HepG2 (cell line): ENCODE measurements at regions of chr16 and their contacts with region 1.

Region 1: GRCh38 chr16:85821441-85822135 is 22.1 kb downstream of the COX4I1 start:
- DNase-seq: peak; percentile 67
- ATAC-seq: peak; percentile 85
- H3K4me3 ChIP-seq: no peak overlapping the region
- H3K27ac ChIP-seq: no peak overlapping the region
- H3K4me1 ChIP-seq: no peaks in the 10 kb centered on the region
- H3K27me3 ChIP-seq: peaks cover 2 to 23% of the 10 kb centered on the region in 2 experiments; a peak in 4 of 5 replicates
- CTCF ChIP-seq: peak; percentile 98
- EP300 ChIP-seq: no peak
- POLR2A ChIP-seq: no peak
- RAD21 ChIP-seq: peak; percentile 100

Region 2: DNA sequence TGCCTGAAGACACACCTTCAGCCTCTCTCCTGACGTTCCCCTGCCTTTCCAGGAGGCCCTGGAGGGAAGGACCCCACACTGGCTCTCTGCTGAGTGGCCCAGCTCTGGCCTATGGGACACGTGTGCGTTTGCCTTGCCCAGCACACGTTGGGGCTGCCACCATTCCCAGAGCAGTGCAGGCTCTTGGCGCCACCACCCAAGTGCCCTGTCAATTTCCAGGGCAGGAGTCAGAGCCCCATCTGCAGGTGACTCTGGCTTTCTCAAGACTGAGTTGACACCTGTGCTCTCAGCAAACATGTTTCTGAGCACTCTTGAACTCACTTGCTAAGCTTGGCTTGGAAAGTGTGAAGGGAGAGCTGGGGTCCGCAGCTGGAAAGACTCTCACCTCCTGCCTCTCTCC is 72.7 kb after region 1 on chr16:
- CTCF ChIA-PET with region 1: interaction called, 16 read pairs
- POLR2A ChIA-PET with region 1: no interaction called
- in situ Hi-C with region 1: loop called (anchors 5 kb)
- intact Hi-C with region 1: loop called (anchors 1 kb)
- DNase-seq: peak; percentile 40
- ATAC-seq: peak; percentile 86
- H3K4me3 ChIP-seq: no peak overlapping the region
- H3K27ac ChIP-seq: no peak overlapping the region
- H3K4me1 ChIP-seq: peaks cover 10% of the 10 kb centered on the region; the same call in 1 of the 2 replicates
- H3K27me3 ChIP-seq: peaks cover 5 to 67% of the 10 kb centered on the region in 2 experiments; a peak in 4 of 5 replicates
- CTCF ChIP-seq: peak; percentile 71
- EP300 ChIP-seq: no peak
- POLR2A ChIP-seq: no peak
- RAD21 ChIP-seq: peak; percentile 79

Region 3: GRCh38 chr16:85986931-85987749 is 165.6 kb after region 1 on chr16:
- CTCF ChIA-PET with region 1: interaction called, 108 read pairs
- POLR2A ChIA-PET with region 1: interaction called, 4 read pairs
- in situ Hi-C with region 1: loop called (anchors 5 kb)
- intact Hi-C with region 1: loop called (anchors 1 kb)
- DNase-seq: peak; percentile 12
- ATAC-seq: peak; percentile 66
- H3K4me3 ChIP-seq: peak overlapping the region; percentile 3 to 61 (median 6); a peak in 5 of 6 replicates
- H3K27ac ChIP-seq: no peak overlapping the region
- H3K4me1 ChIP-seq: peaks cover 8% of the 10 kb centered on the region; the same call in 1 of the 2 replicates
- H3K27me3 ChIP-seq: peaks cover 0 to 39% of the 10 kb centered on the region in 2 experiments; a peak in 3 of 5 replicates
- CTCF ChIP-seq: peak; percentile 65
- EP300 ChIP-seq: no peak
- POLR2A ChIP-seq: no peak
- RAD21 ChIP-seq: peak; percentile 70

Region 4: GRCh38 chr16:86016201-86016871 is 194.7 kb after region 1 on chr16:
- CTCF ChIA-PET with region 1: interaction called, 81 read pairs
- POLR2A ChIA-PET with region 1: no interaction called
- in situ Hi-C with region 1: loop called (anchors 5 kb)
- intact Hi-C with region 1: loop called (anchors 1 kb)
- DNase-seq: peak; percentile 47
- ATAC-seq: peak; percentile 81
- H3K4me3 ChIP-seq: no peak overlapping the region
- H3K27ac ChIP-seq: no peak overlapping the region
- H3K4me1 ChIP-seq: no peaks in the 10 kb centered on the region
- H3K27me3 ChIP-seq: no peaks in the 10 kb centered on the region; a peak in 1 of 5 replicates
- CTCF ChIP-seq: peak; percentile 85
- EP300 ChIP-seq: no peak
- POLR2A ChIP-seq: no peak
- RAD21 ChIP-seq: peak; percentile 87